ENCODE measurements at regions of chr5 and their contacts with region 1.

Region 1: GRCh38 chr5:179858586-179859427 is at the start of gene MRNIP:
- DNase-seq: peak; percentile 90
- ATAC-seq: peak; percentile 96
- H3K4me3 ChIP-seq: peak within 1 kb of the TSS; percentile 80 to 90 (median 87)
- H3K27ac ChIP-seq: peak within 1 kb of the TSS; percentile 92
- H3K4me1 ChIP-seq: peaks cover 26% of the 10 kb centered on the region
- H3K27me3 ChIP-seq: no peaks in the 10 kb centered on the region
- CTCF ChIP-seq: peak; percentile 69
- EP300 ChIP-seq: no peak
- POLR2A ChIP-seq: peak; percentile 80 to 97
- RAD21 ChIP-seq: peak; percentile 17; the same call in 1 of the 2 replicates
- total RNA-seq, gene MRNIP: 11.3 and 15.5 TPM in 2 replicates

Region 2: GRCh38 chr5:179974946-179975712 is 116.3 kb after region 1 on chr5:
- CTCF ChIA-PET with region 1: no interaction called
- POLR2A ChIA-PET with region 1: no interaction called
- in situ Hi-C with region 1: no loop called
- intact Hi-C with region 1: no loop called
- DNase-seq: peak; percentile 32
- ATAC-seq: peak; percentile 96
- H3K4me3 ChIP-seq: no peak overlapping the region
- H3K27ac ChIP-seq: no peak overlapping the region
- H3K4me1 ChIP-seq: no peaks in the 10 kb centered on the region
- H3K27me3 ChIP-seq: no peaks in the 10 kb centered on the region
- CTCF ChIP-seq: peak; percentile 87
- EP300 ChIP-seq: no peak
- POLR2A ChIP-seq: no peak
- RAD21 ChIP-seq: peak; percentile 67

Region 3: GRCh38 chr5:180090098-180090768 is 231.4 kb after region 1 on chr5:
- CTCF ChIA-PET with region 1: no interaction called
- POLR2A ChIA-PET with region 1: no interaction called
- in situ Hi-C with region 1: no loop called
- intact Hi-C with region 1: loop called (anchors 2 kb)
- DNase-seq: peak; percentile 36
- ATAC-seq: peak; percentile 82
- H3K4me3 ChIP-seq: peak overlapping the region; percentile 34 to 59 (median 52); a peak in 4 of 6 replicates
- H3K27ac ChIP-seq: no peak overlapping the region
- H3K4me1 ChIP-seq: peaks cover 14% of the 10 kb centered on the region; the same call in 1 of the 2 replicates
- H3K27me3 ChIP-seq: peaks cover 1 to 4% of the 10 kb centered on the region in 2 experiments; a peak in 3 of 5 replicates
- CTCF ChIP-seq: peak; percentile 72
- EP300 ChIP-seq: no peak
- POLR2A ChIP-seq: no peak
- RAD21 ChIP-seq: no peak

Measured in HepG2 (cell line).